Sigmoid colon (tissue), 7 donors: ENCODE measurements at regions of chr1 and their contacts with region 1.

Region 1: DNA sequence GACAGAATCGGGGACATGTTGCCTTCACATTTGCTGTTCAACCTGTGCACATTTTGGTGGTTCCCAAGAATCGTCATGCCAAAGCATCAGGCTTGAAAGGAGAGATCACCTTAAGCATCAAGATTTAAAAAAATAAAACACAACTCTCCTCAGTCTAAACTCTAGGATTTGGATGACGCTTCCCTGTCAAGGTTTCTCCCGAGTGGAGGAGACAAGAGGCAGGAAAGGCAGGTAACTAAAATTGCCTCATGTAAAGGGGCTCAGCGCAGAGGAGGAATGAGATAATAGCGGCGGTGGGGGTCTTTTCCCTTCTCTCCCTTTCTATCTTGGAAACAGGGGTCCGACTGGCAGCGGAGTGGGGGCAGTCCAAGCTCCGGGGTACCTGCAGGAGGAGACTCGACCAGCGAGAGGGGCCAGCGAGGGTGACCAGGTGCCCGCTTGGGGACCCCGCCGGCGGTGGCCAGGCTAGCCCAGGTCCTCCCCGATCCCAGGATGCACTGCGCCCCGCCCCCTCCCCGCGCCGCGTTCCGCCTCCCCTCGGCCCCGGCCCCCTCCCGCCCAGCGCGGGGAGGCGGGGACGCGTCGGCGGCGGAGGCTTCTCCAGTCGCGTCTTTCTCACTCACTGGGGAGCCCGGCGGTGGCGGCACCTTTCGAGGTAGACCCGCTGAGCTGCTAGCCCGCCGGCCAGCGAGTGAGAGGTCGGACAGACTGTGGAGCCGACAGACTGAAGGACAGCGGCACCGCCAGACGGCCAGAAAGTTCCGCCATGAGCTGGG is at the start of gene FNBP1L:
- DNase-seq: peak; percentile 77
- H3K4me3 ChIP-seq: peak within 1 kb of the TSS; percentile 90 to 98 (median 94)
- H3K27ac ChIP-seq: peak within 1 kb of the TSS; percentile 78 to 81 (median 80)
- H3K4me1 ChIP-seq: peaks cover 0 to 17% (median 13%) of the 10 kb centered on the region in 4 donors
- H3K27me3 ChIP-seq: no peaks in the 10 kb centered on the region
- CTCF ChIP-seq: no peak
- EP300 ChIP-seq: no peak
- POLR2A ChIP-seq: no peak
- total RNA-seq, gene FNBP1L: 13.4 to 26.3 (median 18.4) TPM

Region 2: DNA sequence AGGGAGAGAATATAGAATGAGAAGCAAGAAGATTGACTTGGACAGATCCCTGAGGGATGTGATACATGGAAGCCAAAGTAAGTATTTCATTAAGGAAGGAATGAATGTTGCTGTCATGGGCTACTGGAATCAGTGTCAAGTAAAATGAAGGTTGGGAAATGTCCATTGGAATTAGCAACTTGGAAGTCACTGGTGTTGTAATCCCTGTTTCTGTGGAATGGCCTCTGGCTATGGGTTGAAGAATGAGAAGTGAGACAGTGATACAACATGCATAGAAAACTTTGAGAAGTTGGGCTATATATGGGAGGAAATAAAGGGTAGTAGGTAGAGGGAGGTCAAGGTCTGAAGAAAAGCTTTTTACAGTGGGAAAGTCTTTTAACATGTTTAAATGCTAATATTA is 212.4 kb before region 1 on chr1:
- intact Hi-C with region 1: no loop called
- DNase-seq: no peak
- H3K4me3 ChIP-seq: no peak overlapping the region
- H3K27ac ChIP-seq: no peak overlapping the region
- H3K4me1 ChIP-seq: no peaks in the 10 kb centered on the region
- H3K27me3 ChIP-seq: no peaks in the 10 kb centered on the region
- CTCF ChIP-seq: no peak
- EP300 ChIP-seq: no peak
- POLR2A ChIP-seq: no peak

Region 3: GRCh38 chr1:93552741-93553455 is 105.2 kb after region 1 on chr1:
- intact Hi-C with region 1: loop called (anchors 10 kb)
- DNase-seq: no peak
- H3K4me3 ChIP-seq: no peak overlapping the region
- H3K27ac ChIP-seq: peak overlapping the region; percentile 17 to 56 (median 48)
- H3K4me1 ChIP-seq: peaks cover 0 to 24% (median 20%) of the 10 kb centered on the region in 4 donors
- H3K27me3 ChIP-seq: no peaks in the 10 kb centered on the region
- CTCF ChIP-seq: no peak
- EP300 ChIP-seq: no peak
- POLR2A ChIP-seq: no peak

Region 4: DNA sequence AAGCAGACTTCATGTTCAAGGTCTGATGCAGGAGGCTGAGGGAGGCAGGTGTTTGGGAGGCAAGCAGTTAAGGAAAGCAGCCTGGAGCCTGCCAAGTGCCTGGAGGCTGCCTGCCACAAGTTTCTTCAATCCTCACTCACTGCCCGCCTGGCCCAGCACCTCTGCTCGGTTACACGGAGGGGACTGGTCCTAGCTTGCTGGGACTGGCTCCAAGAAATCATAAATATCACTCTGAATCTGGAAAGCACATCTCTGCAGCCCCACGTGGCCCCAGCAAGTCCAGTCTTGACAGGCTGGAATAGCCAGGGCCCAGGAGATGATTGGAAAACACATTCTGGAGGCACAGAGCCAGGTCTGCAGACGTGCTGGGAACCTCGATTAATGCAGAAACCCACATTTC is 150.0 kb after region 1 on chr1:
- intact Hi-C with region 1: loop called (anchors 5 kb)
- DNase-seq: peak; percentile 78
- H3K4me3 ChIP-seq: no peak overlapping the region
- H3K27ac ChIP-seq: peak overlapping the region; percentile 19 to 68 (median 30)
- H3K4me1 ChIP-seq: peaks cover 0 to 77% (median 58%) of the 10 kb centered on the region in 4 donors
- H3K27me3 ChIP-seq: no peaks in the 10 kb centered on the region
- CTCF ChIP-seq: no peak
- EP300 ChIP-seq: peak in 1 of 4 donors; percentile 19
- POLR2A ChIP-seq: no peak

Region 5: DNA sequence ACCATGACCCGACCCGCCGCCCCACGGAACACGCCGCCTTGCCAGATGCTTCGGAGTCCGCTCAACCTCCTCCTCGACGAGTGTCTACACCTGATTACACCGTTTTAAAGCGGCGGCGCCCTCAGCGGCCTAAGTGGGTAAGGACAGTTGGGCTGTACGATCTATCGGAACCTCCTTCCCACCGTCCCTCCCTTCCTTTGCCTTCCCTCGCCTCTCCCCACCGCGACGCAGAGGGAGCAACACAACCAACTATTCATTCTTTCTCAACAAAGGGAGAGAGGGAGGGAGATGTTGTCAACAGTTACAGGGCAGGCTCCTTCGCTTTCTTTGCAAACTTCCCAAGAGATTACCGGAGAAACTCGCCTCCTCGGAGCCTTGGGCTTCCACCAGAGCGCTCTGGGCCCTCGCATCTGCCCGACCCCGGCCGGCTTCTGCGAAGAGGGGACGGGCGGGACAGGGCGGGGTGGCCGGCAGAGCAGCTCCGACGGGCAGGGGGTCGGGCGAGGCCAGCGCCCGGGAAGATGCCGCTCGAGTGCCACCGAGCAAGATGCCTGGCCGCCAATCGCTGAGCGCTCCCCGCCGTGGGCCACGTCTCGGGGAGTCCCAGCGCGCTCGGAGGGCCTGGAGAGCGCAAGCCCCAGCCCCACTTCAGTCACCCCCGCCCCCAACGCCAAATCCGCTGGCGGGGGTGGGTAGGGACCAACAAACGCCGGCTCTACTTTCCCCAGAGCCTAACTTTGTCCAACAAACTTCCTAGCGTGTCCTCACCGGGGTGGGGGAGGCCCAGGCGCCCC is 233.2 kb after region 1 on chr1:
- intact Hi-C with region 1: loop called (anchors 5 kb)
- DNase-seq: peak; percentile 91
- H3K4me3 ChIP-seq: peak overlapping the region; percentile 81 to 90 (median 88)
- H3K27ac ChIP-seq: peak overlapping the region; percentile 80 to 93 (median 90)
- H3K4me1 ChIP-seq: peaks cover 0 to 30% (median 11%) of the 10 kb centered on the region in 4 donors
- H3K27me3 ChIP-seq: no peaks in the 10 kb centered on the region
- CTCF ChIP-seq: peak; percentile 25 to 78 (median 68)
- EP300 ChIP-seq: no peak
- POLR2A ChIP-seq: peak in 1 of 2 donors; percentile 19